AG04450 (cell line): ENCODE measurements at regions of chr18 and their contacts with region 1.

Region 1: GRCh38 chr18:27860701-27861107 is 316.2 kb downstream of the CDH2 start:
- DNase-seq: no peak
- H3K4me3 ChIP-seq: no peak overlapping the region
- H3K27ac ChIP-seq: no peak overlapping the region
- H3K27me3 ChIP-seq: no peaks in the 10 kb centered on the region
- CTCF ChIP-seq: no peak

Region 2: GRCh38 chr18:27558388-27559155 is 302.1 kb before region 1 on chr18:
- CTCF ChIA-PET with region 1: no interaction called
- POLR2A ChIA-PET with region 1: no interaction called
- DNase-seq: no peak
- H3K4me3 ChIP-seq: no peak overlapping the region
- H3K27ac ChIP-seq: no peak overlapping the region
- H3K27me3 ChIP-seq: no peaks in the 10 kb centered on the region
- CTCF ChIP-seq: no peak

Region 3: DNA sequence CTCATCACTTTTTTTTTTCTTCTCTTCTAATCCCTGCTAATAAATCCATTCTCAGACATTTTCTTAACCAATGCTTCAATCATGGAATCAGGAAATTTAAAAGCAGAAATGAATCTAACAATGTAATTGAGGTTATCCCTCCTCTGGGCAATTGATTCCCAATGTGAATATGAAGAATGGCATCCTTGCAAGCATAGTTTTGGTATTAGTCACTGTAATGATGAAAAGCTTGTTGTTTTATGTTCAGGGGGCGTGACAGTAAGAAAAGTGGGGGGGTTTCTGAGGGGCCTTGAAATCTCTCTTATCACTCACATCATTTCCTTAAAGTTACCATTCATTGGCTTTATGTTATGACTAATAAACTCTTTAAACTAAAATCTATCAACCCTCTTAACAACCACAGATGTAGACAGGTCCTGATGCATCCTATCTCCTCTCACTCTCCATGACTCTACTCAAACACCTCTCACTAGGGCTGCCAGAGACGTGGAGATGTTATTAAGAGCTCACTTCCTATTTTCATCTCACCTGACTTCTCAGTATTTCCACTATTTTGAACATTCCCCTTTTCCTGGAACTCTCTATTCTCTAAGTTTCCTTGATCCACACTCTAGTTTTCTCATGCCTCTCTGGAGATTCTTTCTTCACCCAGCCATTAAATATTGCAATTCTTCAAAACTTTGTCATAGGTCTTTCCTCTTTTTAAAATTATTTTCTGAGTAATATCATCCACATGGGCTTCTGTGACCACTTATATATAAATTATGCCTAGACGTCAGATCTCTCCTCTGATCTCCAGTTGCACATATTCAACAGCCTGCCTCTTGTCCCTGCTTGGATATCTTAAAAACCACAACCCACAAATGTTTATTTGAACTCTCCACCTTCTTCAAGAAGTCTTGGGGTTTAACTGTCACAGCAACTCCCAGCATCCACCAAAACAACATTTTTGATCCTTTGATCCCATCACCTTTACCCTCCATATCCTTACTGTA is 16.6 kb before region 1 on chr18:
- CTCF ChIA-PET with region 1: no interaction called
- POLR2A ChIA-PET with region 1: no interaction called
- DNase-seq: no peak
- H3K4me3 ChIP-seq: no peak overlapping the region
- H3K27ac ChIP-seq: no peak overlapping the region
- H3K27me3 ChIP-seq: peaks cover 7% of the 10 kb centered on the region
- CTCF ChIP-seq: no peak

Region 4: GRCh38 chr18:27871726-27872125 is 11.0 kb after region 1 on chr18:
- CTCF ChIA-PET with region 1: no interaction called
- POLR2A ChIA-PET with region 1: interaction called, 12 read pairs
- DNase-seq: no peak
- H3K4me3 ChIP-seq: no peak overlapping the region
- H3K27ac ChIP-seq: no peak overlapping the region
- H3K27me3 ChIP-seq: no peaks in the 10 kb centered on the region
- CTCF ChIP-seq: no peak

Region 5: DNA sequence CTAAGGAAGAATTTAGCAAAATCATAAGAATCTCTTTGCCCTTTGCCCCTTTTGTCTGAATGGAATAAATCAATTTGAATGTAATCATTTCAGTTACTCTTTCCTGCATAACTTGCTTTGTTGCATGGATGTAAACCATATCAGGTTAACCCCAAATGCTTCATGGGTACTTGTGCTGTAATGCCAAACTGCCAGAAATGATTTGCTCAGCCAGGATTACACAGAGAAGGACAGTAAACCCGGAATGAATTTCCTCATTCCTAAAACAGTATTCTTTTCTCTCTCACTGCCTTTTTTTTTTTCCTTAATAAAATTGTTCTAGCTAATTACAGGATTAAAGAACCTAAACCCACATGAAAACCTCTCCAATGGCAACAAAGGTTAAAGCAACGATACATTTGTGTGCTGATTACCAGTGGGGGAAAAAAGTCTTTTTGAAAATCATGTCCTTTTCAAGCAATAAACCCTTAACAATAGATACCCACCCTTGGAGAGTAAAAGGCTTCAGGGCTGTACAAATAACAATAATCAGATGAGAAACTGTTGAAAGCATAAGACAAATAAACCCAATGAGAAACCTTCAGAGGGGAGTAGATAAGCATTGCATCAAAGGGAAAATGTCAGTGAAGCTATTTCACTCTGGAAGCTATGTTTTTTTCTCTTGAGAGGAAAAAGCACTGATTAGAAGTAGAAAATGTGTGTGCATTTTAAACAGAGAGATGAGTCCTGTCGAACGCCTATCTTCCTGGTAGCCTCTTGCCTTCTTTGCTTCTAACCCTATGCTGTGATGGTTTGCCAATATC is 40.9 kb after region 1 on chr18:
- CTCF ChIA-PET with region 1: no interaction called
- POLR2A ChIA-PET with region 1: no interaction called
- DNase-seq: no peak
- H3K4me3 ChIP-seq: no peak overlapping the region
- H3K27ac ChIP-seq: no peak overlapping the region
- H3K27me3 ChIP-seq: no peaks in the 10 kb centered on the region
- CTCF ChIP-seq: no peak